CD4-positive, alpha-beta memory T cell (primary cell): ENCODE measurements at regions of chr10 and their contacts with region 1.

Region 1: DNA sequence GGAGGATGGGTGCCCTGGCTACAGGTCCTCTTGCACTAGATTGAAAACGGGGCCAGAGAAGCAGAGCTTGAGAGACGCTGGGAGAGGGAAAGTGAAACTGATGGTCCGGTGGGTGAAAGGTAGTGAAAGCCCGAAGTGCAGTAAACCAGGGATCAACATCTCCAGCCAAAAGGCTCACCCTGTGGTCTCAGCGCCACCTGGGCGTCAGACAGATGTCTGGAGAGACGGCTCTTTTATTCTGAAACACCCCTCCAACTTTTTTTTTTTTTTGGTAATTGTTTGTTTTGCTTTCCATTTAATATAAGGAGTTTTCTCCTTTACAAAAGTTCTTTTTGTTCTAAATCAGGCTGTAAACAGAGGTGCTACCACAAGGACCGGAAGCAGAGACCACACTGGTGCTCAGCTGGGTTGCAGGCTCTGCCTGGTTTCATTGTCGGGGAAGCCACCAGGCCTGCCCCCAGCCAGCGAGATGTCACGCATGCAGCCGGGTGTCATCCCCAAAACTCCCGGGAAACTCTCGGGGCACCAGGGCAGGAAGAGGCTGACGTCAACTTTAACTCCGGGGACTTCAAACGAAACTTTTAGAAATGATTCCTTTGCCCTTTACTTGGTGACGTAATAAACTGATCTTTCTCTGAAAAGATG is 11.2 kb downstream of the IL2RA start:
- DNase-seq: peak; percentile 91 to 99 (median 94)
- H3K4me3 ChIP-seq: peak overlapping the region; percentile 49 to 76
- H3K4me3 Mint-ChIP-seq: peak overlapping the region; percentile 91 to 97 (median 94)
- H3K27ac ChIP-seq: peak overlapping the region; percentile 88
- H3K27ac Mint-ChIP-seq: peak overlapping the region; percentile 96 to 99 (median 98)
- H3K4me1 ChIP-seq: peaks cover 85% of the 10 kb centered on the region
- H3K4me1 Mint-ChIP-seq: peaks cover 61 to 92% (median 84%) of the 10 kb centered on the region in 4 donors
- H3K27me3 ChIP-seq: no peaks in the 10 kb centered on the region
- H3K27me3 Mint-ChIP-seq: no peaks in the 10 kb centered on the region

Region 2: GRCh38 chr10:5904227-5904626 is 146.7 kb before region 1 on chr10:
- CTCF ChIA-PET with region 1: no interaction called
- POLR2A ChIA-PET with region 1: no interaction called
- intact Hi-C with region 1: no loop called
- DNase-seq: no peak
- H3K4me3 ChIP-seq: no peak overlapping the region
- H3K4me3 Mint-ChIP-seq: no peak overlapping the region
- H3K27ac ChIP-seq: no peak overlapping the region
- H3K27ac Mint-ChIP-seq: peak overlapping the region in 3 of 7 donors; percentile 17 to 86 (median 31)
- H3K4me1 ChIP-seq: peaks cover 12% of the 10 kb centered on the region
- H3K4me1 Mint-ChIP-seq: peaks cover 14 to 44% (median 23%) of the 10 kb centered on the region in 4 donors
- H3K27me3 ChIP-seq: no peaks in the 10 kb centered on the region
- H3K27me3 Mint-ChIP-seq: no peaks in the 10 kb centered on the region

Region 3: GRCh38 chr10:6014241-6014761 is 36.6 kb before region 1 on chr10:
- CTCF ChIA-PET with region 1: interaction called, 106 read pairs
- POLR2A ChIA-PET with region 1: interaction called, 56 read pairs
- intact Hi-C with region 1: loop called (anchors 1 kb)
- DNase-seq: peak; percentile 76 to 92 (median 83)
- H3K4me3 ChIP-seq: no peak overlapping the region
- H3K4me3 Mint-ChIP-seq: peak overlapping the region in 6 of 8 donors; percentile 26 to 82 (median 40)
- H3K27ac ChIP-seq: peak overlapping the region; percentile 70
- H3K27ac Mint-ChIP-seq: peak overlapping the region; percentile 92 to 99 (median 97)
- H3K4me1 ChIP-seq: peaks cover 23% of the 10 kb centered on the region
- H3K4me1 Mint-ChIP-seq: peaks cover 16 to 41% (median 20%) of the 10 kb centered on the region in 4 donors
- H3K27me3 ChIP-seq: no peaks in the 10 kb centered on the region
- H3K27me3 Mint-ChIP-seq: no peaks in the 10 kb centered on the region

Region 4: DNA sequence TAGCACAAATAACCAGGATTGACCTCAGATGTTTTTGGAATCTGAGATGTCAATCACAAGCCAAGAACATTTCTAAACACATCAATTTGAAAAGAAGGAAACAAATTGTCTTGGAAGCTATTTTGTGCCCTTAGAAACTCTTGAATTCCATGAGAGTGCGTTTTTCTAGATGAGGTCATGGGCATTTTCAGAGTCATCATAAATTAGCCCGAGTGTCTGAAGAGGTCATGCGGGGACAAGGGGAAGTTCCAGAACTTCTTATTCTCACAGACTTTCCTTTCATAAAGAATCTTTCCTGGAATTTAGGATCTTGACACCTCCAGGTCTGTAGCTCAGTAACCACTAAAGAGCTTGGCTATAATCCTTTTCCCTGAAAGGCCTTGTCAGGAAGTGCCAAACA is 17.0 kb before region 1 on chr10:
- CTCF ChIA-PET with region 1: interaction called, 54 read pairs
- POLR2A ChIA-PET with region 1: interaction called, 169 read pairs
- intact Hi-C with region 1: loop called (anchors 1 kb)
- DNase-seq: no peak
- H3K4me3 ChIP-seq: no peak overlapping the region
- H3K4me3 Mint-ChIP-seq: no peak overlapping the region
- H3K27ac ChIP-seq: no peak overlapping the region
- H3K27ac Mint-ChIP-seq: peak overlapping the region in 5 of 7 donors; percentile 37 to 82 (median 60)
- H3K4me1 ChIP-seq: peaks cover 61% of the 10 kb centered on the region
- H3K4me1 Mint-ChIP-seq: peaks cover 28 to 78% (median 57%) of the 10 kb centered on the region in 4 donors
- H3K27me3 ChIP-seq: no peaks in the 10 kb centered on the region
- H3K27me3 Mint-ChIP-seq: no peaks in the 10 kb centered on the region

Region 5: GRCh38 chr10:6068422-6068821 is 17.5 kb after region 1 on chr10:
- CTCF ChIA-PET with region 1: interaction called, 9 read pairs
- POLR2A ChIA-PET with region 1: interaction called, 54 read pairs
- intact Hi-C with region 1: loop called (anchors 2 kb)
- DNase-seq: peak; percentile 48 to 73 (median 60)
- H3K4me3 ChIP-seq: peak overlapping the region; percentile 12 to 27
- H3K4me3 Mint-ChIP-seq: peak overlapping the region; percentile 69 to 86 (median 82)
- H3K27ac ChIP-seq: no peak overlapping the region
- H3K27ac Mint-ChIP-seq: peak overlapping the region; percentile 36 to 89 (median 82)
- H3K4me1 ChIP-seq: peaks cover 81% of the 10 kb centered on the region
- H3K4me1 Mint-ChIP-seq: peaks cover 58 to 91% (median 70%) of the 10 kb centered on the region in 4 donors
- H3K27me3 ChIP-seq: no peaks in the 10 kb centered on the region
- H3K27me3 Mint-ChIP-seq: no peaks in the 10 kb centered on the region